ENCODE measurements at regions of chr22 and their contacts with region 1.

Region 1: GRCh38 chr22:29766632-29767170 is at the start of gene ZMAT5:
- DNase-seq: peak; percentile 94
- H3K4me3 Mint-ChIP-seq: peak within 1 kb of the TSS; percentile 93
- H3K27ac Mint-ChIP-seq: peak within 1 kb of the TSS; percentile 79
- H3K4me1 Mint-ChIP-seq: peaks cover 37% of the 10 kb centered on the region
- H3K27me3 Mint-ChIP-seq: no peaks in the 10 kb centered on the region
- total RNA-seq, gene ZMAT5: 23.1 to 26.4 TPM

Region 2: GRCh38 chr22:29750559-29751538 is 15.9 kb before region 1 on chr22:
- CTCF ChIA-PET with region 1: no interaction called
- POLR2A ChIA-PET with region 1: interaction called, 20 read pairs
- DNase-seq: peak; percentile 58
- H3K4me3 Mint-ChIP-seq: no peak overlapping the region
- H3K27ac Mint-ChIP-seq: peak overlapping the region; percentile 81
- H3K4me1 Mint-ChIP-seq: peaks cover 24% of the 10 kb centered on the region
- H3K27me3 Mint-ChIP-seq: no peaks in the 10 kb centered on the region

Region 3: DNA sequence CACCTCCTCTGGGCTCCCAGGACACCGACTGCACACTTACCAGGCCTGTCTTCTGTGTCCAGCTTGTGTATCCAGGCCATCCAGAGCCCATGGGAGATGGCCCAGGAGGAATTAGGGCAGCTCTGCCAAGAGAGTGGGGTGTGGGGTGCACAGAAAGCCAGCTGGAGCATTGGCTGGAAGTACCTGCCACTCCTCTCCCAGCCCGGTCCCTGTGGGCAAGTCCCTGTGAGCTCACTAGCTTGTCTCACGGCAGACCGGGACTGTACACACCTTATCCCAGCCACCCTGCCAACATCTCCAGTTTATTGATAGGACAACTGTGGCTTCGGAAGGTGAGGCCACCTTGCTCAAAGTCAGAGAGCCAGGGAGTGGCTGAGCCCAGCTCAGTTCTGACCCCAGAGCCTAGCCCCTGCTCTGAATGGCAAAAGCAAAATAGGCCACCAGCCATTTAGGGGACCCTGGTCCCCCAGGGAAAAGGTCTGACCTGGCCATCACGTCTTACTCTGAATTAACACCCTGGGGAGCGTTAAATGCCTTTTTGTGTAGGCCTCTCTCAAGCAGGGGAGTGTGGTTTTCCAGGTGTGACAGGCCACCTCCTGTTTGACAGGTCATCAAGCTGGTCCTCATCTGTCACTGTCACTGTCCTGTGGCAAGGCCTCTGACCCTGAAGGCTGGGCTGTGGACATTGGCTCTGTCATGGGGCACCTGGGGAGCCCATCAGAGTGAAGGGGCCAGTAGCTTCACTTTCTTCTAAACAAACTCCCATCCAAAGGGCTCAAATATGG is 15.6 kb after region 1 on chr22:
- CTCF ChIA-PET with region 1: no interaction called
- POLR2A ChIA-PET with region 1: no interaction called
- DNase-seq: no peak
- H3K4me3 Mint-ChIP-seq: no peak overlapping the region
- H3K27ac Mint-ChIP-seq: no peak overlapping the region
- H3K4me1 Mint-ChIP-seq: no peaks in the 10 kb centered on the region
- H3K27me3 Mint-ChIP-seq: no peaks in the 10 kb centered on the region